Gastrocnemius medialis (tissue), 4 donors: ENCODE measurements at regions of chr17 and their contacts with region 1.

Region 1: DNA sequence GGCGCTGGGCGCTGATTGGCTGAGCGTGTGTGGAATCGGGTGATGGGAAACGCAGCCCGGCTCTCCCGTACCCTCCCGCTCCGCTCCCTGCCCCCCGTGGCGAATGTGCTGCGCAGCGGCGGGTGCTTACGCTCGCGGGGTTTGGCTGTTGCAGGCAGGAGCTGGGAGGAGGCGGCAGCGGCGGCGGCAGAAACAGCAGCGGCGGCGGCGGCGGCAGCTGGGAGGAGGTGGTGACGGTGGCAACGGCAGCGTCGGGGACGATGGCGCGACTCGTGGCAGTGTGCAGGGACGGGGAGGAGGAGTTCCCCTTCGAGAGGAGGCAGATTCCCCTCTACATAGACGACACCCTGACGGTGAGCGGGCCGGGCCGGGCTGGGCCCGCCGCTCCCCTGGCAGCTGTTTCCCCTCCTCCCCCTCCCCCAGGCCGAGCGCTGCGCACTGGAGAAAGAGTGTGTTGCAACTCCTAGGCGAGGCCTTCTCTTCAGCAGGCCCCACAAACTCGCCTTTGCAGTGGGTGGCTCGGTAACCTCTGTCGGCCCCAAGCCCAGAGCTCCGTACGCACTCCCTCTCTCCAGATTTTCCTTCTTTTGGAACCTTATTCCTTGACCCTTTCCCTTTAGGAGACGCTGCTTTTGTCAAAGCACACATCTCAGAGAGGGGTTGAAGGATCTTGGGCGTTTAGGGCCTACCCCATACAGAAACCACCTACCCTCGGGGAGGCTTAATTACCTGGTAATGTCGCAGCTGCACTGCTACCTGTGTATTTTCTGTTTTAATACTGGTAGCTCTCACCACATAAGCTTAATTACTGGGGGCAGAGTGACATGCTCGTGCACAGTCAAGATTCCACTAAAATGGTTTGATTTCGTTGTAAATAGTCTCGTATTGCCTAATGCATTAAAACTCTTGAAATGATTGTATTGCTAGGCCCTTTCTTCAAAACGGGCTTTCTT is 1.0 kb downstream of the GGNBP2 start:
- DNase-seq: peak; percentile 94 to 98
- ATAC-seq: peak; percentile 77 to 82
- H3K4me3 ChIP-seq: peak overlapping the region; percentile 79 to 100 (median 94)
- H3K27ac ChIP-seq: peak overlapping the region; percentile 99 to 100 (median 100)
- H3K4me1 ChIP-seq: peaks cover 44 to 45% of the 10 kb centered on the region in 2 donors
- H3K27me3 ChIP-seq: no peaks in the 10 kb centered on the region
- CTCF ChIP-seq: peak in 1 of 5 experiments; percentile 26
- POLR2A ChIP-seq: peak; percentile 83 to 92

Region 2: GRCh38 chr17:35587074-35587971 is 958.4 kb before region 1 on chr17 and contains the start of gene AP2B1:
- in situ Hi-C with region 1: loop called in 1 of 4 experiments (anchors 25 kb)
- intact Hi-C with region 1: no loop called
- DNase-seq: peak; percentile 82 to 94
- ATAC-seq: peak; percentile 97 to 98
- H3K4me3 ChIP-seq: peak within 1 kb of the TSS; percentile 78 to 96 (median 83)
- H3K27ac ChIP-seq: peak within 1 kb of the TSS; percentile 88 to 97 (median 92)
- H3K4me1 ChIP-seq: peaks cover 26 to 27% of the 10 kb centered on the region in 2 donors
- H3K27me3 ChIP-seq: no peaks in the 10 kb centered on the region
- CTCF ChIP-seq: peak in 2 of 5 experiments; percentile 39 to 42
- POLR2A ChIP-seq: peak; percentile 65 to 74
- total RNA-seq, gene AP2B1: 31.3 to 48.7 (median 38.1) TPM

Region 3: DNA sequence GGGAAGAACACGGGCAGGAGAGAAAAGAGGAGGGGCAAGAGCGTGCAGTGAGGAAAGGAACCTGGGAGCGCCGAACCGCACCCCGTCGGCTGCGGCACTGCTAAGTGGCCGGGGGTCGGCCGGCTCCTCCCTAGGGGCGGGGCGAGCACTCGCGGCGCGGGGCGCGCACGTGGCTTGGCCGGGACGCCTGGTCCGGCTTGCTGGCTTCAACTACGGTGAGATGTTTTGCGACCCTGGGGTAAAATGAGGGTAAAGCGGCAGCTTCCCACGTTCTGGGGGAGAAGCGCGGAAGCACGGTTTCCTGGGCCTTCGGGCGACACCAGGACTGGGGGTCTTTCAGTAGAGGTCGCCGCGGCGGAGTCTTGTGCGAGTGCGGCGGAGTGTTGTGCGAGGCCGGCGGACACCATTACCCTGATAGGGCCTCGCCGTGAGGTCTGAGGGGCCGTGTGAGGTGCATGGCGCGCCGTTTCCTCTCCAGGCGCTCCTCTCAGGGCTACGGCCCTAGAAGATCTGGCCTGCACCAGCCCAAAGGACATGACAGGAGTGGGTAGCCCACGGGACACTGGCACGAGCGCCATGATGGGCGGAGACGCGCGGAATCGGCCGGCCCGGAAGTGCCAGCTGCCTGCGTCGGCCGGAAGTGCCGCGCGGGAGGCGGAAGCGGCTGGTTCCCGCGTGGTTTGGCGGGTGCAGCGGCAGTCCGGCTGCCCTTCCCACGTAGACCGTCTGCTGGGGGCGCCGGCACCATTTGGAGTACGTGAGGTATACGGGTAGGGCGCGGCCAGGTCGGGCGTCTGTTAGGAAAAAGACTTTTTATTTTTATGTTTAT is 10.7 kb before region 1 on chr17 and contains the starts of genes MYO19 and PIGW:
- in situ Hi-C with region 1: no loop called
- intact Hi-C with region 1: loop called (anchors 1 kb)
- DNase-seq: peak; percentile 79 to 88
- ATAC-seq: peak; percentile 84 to 89
- H3K4me3 ChIP-seq: peak within 1 kb of the TSS; percentile 70 to 98 (median 92)
- H3K27ac ChIP-seq: peak within 1 kb of the TSS; percentile 91 to 100 (median 99)
- H3K4me1 ChIP-seq: peaks cover 11 to 19% of the 10 kb centered on the region in 2 donors
- H3K27me3 ChIP-seq: no peaks in the 10 kb centered on the region
- CTCF ChIP-seq: peak in 1 of 5 experiments; percentile 11
- POLR2A ChIP-seq: peak; percentile 83 to 92
- total RNA-seq, gene MYO19: 7.5 to 16.8 (median 13.2) TPM
- total RNA-seq, gene PIGW: 3.0 to 6.9 (median 4.7) TPM

Region 4: GRCh38 chr17:36578671-36579070 is 32.9 kb after region 1 on chr17:
- in situ Hi-C with region 1: no loop called
- intact Hi-C with region 1: no loop called
- DNase-seq: no peak
- ATAC-seq: no peak
- H3K4me3 ChIP-seq: no peak overlapping the region
- H3K27ac ChIP-seq: no peak overlapping the region
- H3K4me1 ChIP-seq: no peaks in the 10 kb centered on the region
- H3K27me3 ChIP-seq: no peaks in the 10 kb centered on the region
- CTCF ChIP-seq: no peak
- POLR2A ChIP-seq: no peak

Region 5: GRCh38 chr17:36591434-36592315 is 45.9 kb after region 1 on chr17 and contains the start of gene DHRS11:
- in situ Hi-C with region 1: no loop called
- intact Hi-C with region 1: loop called (anchors 2 kb)
- DNase-seq: peak; percentile 61 to 77
- ATAC-seq: peak; percentile 91 to 94
- H3K4me3 ChIP-seq: peak within 1 kb of the TSS; percentile 73 to 78 (median 75)
- H3K27ac ChIP-seq: peak within 1 kb of the TSS; percentile 49 to 79 (median 78)
- H3K4me1 ChIP-seq: peaks cover 14 to 20% of the 10 kb centered on the region in 2 donors
- H3K27me3 ChIP-seq: no peaks in the 10 kb centered on the region
- CTCF ChIP-seq: no peak
- POLR2A ChIP-seq: peak in 1 of 2 donors; percentile 26
- total RNA-seq, gene DHRS11: 4.9 to 15.8 (median 7.4) TPM

Region 6: GRCh38 chr17:36601303-36602029 is 55.7 kb after region 1 on chr17 and contains the start of gene MRM1:
- in situ Hi-C with region 1: no loop called
- intact Hi-C with region 1: loop called (anchors 2 kb)
- DNase-seq: peak; percentile 86 to 92
- ATAC-seq: peak; percentile 92 to 93
- H3K4me3 ChIP-seq: peak within 1 kb of the TSS; percentile 82 to 100 (median 88)
- H3K27ac ChIP-seq: peak within 1 kb of the TSS; percentile 76 to 95 (median 90)
- H3K4me1 ChIP-seq: peaks cover 12 to 23% of the 10 kb centered on the region in 2 donors
- H3K27me3 ChIP-seq: no peaks in the 10 kb centered on the region
- CTCF ChIP-seq: peak in 1 of 5 experiments; percentile 21
- POLR2A ChIP-seq: peak; percentile 40 to 66
- total RNA-seq, gene MRM1: 8.8 to 13.9 (median 10.8) TPM

Region 7: DNA sequence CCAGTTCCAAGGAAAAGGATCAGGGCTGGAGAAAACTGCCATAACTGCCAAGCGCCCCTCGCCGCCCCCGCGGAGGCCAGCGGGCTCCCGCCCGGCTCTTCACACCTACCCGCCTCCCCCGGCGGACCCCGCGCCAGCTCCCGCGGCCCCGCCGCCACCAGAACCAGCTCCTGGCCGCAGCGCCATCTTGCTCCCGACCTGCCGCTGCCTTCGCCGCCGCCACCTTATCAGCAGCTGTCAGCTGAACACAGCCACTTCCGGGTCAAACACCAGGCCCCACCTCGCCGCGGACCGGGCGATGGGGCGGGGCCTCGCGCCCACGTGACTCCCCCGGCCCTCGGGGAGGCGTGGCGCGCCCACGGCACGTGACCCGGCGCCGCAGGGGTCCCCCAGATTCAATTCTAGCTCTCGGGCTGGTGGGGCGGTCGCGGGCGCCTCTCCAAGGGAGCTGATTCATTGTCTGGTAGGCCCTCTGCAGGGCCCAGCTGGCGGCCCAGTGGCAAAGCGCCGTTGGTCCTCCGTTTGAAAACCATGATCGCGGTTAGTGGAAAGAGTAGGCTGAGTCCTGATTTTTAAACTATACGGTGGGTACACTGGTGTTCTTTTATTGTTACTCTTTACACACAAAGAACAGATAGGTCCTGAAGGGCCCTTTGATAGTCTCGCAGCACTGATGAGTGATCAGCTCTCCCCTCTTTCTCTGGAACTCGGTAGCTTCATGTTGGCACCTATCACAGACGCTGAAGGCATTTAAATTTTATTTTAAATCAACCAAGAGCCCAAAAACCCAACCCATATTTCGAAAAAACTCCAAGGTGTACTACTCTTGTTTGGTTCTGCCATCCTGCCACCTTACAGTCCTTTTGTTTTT is 1063.7 kb after region 1 on chr17 and contains the start of gene SYNRG:
- in situ Hi-C with region 1: loop called in 1 of 4 experiments (anchors 25 kb)
- intact Hi-C with region 1: no loop called
- DNase-seq: peak; percentile 90 to 93
- ATAC-seq: peak; percentile 97 to 98
- H3K4me3 ChIP-seq: peak within 1 kb of the TSS; percentile 79 to 98 (median 86)
- H3K27ac ChIP-seq: peak within 1 kb of the TSS; percentile 90 to 98 (median 91)
- H3K4me1 ChIP-seq: peaks cover 28 to 30% of the 10 kb centered on the region in 2 donors
- H3K27me3 ChIP-seq: no peaks in the 10 kb centered on the region
- CTCF ChIP-seq: peak in 3 of 5 experiments; percentile 8 to 45 (median 14)
- POLR2A ChIP-seq: peak; percentile 79 to 84
- total RNA-seq, gene SYNRG: 16.0 to 25.0 (median 21.9) TPM